Aorta (tissue), 5 donors: ENCODE measurements at regions of chr6 and their contacts with region 1.

Region 1: DNA sequence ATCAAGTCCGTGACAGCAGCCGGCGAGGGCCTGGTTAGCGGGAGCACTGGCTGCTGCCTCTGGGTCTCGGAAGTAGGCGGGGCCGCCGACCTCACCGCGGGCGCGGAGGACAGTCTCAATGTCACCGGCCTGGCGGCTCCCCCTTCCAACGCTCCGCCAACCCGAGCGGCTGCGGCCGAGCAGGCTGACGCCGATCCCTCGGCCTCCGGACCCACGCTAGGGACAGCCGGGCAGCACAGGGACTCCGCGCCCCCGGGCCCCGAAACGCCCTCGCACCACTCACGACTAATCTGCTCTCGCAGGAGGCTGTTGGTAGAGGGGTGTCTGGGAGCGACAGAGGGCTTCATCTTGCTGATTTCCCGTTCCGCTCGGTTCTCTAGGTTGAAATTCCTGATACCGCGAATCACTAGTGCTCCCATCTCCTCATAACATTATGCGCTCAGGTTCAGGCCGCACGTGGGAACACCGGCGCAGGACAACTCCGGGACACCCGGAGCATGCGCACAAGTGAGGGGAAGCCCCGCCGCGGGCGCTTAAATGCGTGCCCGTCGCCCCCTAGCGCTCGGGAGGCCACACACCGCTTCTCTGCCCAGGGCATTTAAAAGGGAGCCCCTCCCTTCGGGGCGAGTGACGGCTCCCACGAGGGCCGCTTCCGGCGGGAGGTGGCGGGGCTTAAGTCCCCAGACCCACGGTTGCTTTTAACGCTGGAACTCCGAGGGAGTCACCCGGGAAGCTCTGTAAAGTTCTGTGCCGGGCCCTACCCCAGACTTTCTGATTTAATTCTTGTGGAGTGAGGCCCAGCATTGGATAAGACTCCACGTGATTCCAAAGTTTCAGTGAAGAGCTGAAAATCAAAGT is at the start of gene NDUFAF4:
- DNase-seq: peak; percentile 97 to 99
- ATAC-seq: peak; percentile 100
- H3K4me3 ChIP-seq: peak within 1 kb of the TSS; percentile 80 to 88
- H3K27ac ChIP-seq: peak within 1 kb of the TSS; percentile 89 to 90
- H3K4me1 ChIP-seq: no peaks in the 10 kb centered on the region
- H3K27me3 ChIP-seq: no peaks in the 10 kb centered on the region
- total RNA-seq, gene NDUFAF4: 13.4 to 32.0 TPM

Region 2: DNA sequence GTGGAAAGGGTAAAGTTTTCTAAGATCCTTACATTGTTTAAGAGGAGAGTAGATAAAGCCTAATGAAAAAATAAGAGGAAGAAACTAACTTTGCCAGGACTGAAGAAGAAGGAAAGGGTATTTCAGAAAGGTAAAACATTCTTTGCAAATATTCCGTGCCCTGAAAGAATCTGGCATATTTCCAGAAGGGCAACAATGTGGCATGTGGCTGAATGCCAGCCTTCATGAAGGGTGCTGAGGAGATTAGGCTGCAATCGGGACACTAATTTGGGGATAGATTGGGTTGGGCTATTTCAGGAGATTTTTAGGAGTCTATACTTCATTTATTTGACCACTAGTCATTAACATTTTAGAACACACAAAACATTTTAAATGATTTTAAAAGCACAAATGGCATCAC is 392.2 kb before region 1 on chr6:
- intact Hi-C with region 1: no loop called
- DNase-seq: no peak
- ATAC-seq: no peak
- H3K4me3 ChIP-seq: no peak overlapping the region
- H3K27ac ChIP-seq: no peak overlapping the region
- H3K4me1 ChIP-seq: peaks cover 0 to 1% of the 10 kb centered on the region in 2 donors
- H3K27me3 ChIP-seq: no peaks in the 10 kb centered on the region

Region 3: GRCh38 chr6:96521644-96522464 is 375.8 kb before region 1 on chr6 and contains the start of gene UFL1:
- intact Hi-C with region 1: loop called in 1 of 2 experiments (anchors 5 kb)
- DNase-seq: peak; percentile 96 to 98
- ATAC-seq: peak; percentile 99
- H3K4me3 ChIP-seq: peak within 1 kb of the TSS; percentile 87 to 90
- H3K27ac ChIP-seq: peak within 1 kb of the TSS; percentile 68 to 98
- H3K4me1 ChIP-seq: peaks cover 3 to 4% of the 10 kb centered on the region in 2 donors
- H3K27me3 ChIP-seq: no peaks in the 10 kb centered on the region
- total RNA-seq, gene UFL1: 25.3 to 26.9 TPM

Region 4: GRCh38 chr6:96626759-96627364 is 270.8 kb before region 1 on chr6:
- intact Hi-C with region 1: loop called (anchors 5 kb)
- DNase-seq: no peak
- ATAC-seq: no peak
- H3K4me3 ChIP-seq: no peak overlapping the region
- H3K27ac ChIP-seq: no peak overlapping the region
- H3K4me1 ChIP-seq: no peaks in the 10 kb centered on the region
- H3K27me3 ChIP-seq: no peaks in the 10 kb centered on the region

Region 5: DNA sequence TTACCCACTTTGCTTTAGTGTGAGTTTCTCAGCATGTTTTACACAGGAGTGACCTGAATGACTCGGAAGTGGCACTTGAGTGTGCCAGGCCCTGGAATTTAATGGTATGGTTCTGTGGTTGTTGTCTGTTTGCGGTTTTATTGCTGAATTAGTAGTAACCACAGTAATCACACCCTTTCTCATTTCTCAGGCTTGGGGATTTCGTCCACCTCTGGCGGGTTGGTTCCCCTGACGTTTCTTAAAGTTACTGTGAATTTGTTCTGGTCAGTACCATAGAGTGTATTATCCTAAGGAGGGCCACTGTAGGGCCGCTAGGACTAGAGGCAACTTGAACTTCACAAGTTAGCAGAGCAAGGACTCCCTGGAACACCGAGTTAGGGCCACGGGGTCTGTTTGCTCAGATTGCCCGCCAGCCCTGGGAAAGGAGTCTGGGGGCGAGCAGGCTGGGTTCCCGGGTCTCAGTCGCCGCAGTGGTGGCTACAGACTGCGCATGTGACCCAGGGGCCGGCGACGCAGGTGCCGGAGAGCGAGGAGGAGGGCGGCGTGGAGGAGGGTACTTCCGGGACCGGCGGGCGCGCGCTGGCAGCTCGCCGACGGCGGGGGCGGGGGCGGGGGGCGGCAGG is 26.4 kb after region 1 on chr6:
- intact Hi-C with region 1: loop called in 1 of 2 experiments (anchors 2 kb)
- DNase-seq: no peak
- ATAC-seq: peak; percentile 24
- H3K4me3 ChIP-seq: peak overlapping the region; percentile 77 to 83
- H3K27ac ChIP-seq: peak overlapping the region in 1 of 2 donors; percentile 60
- H3K4me1 ChIP-seq: no peaks in the 10 kb centered on the region
- H3K27me3 ChIP-seq: no peaks in the 10 kb centered on the region

Region 6: DNA sequence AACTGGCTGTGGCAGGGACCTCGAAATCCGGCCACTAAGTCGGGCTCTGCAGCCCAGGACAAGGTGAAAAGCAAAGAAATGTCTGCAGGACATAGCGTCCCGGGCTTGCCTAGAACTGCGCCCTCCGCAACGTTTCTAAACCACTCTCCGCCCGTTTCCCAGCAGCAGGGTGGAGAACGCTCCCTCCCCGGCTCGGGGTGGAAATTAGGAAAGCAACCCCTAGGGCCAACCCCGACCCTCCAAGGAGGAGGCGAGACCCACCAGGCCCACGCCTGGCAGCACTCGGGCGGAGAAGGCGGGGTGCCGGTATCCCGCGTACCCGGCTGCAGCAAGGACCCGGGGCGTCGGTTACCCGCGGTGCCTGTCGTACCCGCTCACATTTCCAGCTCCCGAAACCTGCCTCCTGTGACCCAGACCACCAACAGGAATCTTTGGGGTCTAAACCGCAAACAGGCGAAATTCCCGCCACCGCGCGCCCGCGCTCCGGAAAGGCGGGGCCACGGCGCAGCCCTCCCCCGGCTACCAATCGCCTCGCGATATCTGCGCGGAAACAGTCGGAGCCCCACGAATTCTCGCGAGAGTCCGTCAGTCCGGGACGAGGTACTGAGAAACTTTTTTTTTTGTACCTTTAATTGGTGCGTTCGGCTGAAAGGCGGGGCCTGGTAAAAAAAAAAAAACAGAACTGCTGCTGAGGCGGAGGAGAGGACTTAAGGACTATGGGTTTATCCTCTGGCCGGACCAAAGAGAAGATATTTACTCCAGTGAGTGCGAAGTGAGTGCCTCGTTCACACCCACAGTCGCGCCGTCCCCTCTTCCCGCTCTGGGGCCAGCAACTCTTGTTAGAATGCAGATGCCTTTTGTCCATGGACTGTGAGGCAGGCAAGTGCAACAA is 385.4 kb after region 1 on chr6 and contains the start of gene MMS22L:
- intact Hi-C with region 1: loop called in 1 of 2 experiments (anchors 5 kb)
- DNase-seq: peak; percentile 97 to 99
- ATAC-seq: peak; percentile 100
- H3K4me3 ChIP-seq: peak within 1 kb of the TSS; percentile 51 to 86
- H3K27ac ChIP-seq: peak within 1 kb of the TSS in 1 of 2 donors; percentile 10
- H3K4me1 ChIP-seq: no peaks in the 10 kb centered on the region
- H3K27me3 ChIP-seq: no peaks in the 10 kb centered on the region
- total RNA-seq, gene MMS22L: 6.6 to 10.8 TPM